Tibial artery (tissue), 4 donors: ENCODE measurements at regions of chr2 and their contacts with region 1.

Region 1: DNA sequence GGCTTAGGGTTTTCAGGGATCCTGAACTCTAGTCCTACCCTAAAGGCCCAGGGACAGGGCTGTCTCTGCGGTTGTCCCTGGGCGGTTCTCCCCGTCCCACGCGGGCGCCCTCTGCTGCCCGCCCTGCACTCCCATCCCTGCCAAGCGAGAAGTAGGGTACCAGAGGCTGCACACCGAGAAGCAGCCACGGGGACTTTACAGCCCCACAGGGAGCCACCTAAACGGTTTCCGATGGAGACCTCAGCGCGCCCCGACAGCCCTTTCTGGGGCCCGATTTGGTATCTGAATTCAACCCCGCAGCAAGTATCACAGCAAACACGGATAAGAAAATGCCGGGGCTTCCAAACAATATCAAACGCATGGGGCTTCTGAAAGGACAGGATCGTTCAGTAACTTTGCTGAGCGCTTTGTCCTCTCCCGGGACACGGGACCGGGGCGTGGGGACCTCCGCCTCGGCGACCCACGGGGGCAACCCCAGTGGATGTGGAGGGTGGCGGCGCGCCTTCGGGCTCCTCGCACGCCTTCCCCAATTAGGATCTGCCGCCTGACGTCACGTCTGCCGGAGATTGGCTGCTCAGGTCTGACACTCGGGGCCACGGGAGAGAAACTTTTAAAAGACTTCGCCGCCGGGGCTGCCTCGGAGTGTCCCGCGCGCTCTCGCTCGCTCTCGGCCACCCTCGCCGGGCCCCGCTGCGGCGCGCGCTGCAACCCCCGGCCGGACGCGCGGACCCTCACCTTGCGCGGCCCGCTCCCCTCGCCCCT is at the start of gene LTBP1:
- DNase-seq: peak; percentile 51 to 89
- H3K4me3 ChIP-seq: peak within 1 kb of the TSS; percentile 77 to 82
- H3K27ac ChIP-seq: peak within 1 kb of the TSS; percentile 77 to 82
- H3K4me1 ChIP-seq: peaks cover 0 to 15% (median 9%) of the 10 kb centered on the region in 4 donors
- H3K27me3 ChIP-seq: no peaks in the 10 kb centered on the region
- CTCF ChIP-seq: peak; percentile 40 to 75

Region 2: GRCh38 chr2:33022989-33023727 is 76.7 kb after region 1 on chr2:
- intact Hi-C with region 1: loop called (anchors 5 kb)
- DNase-seq: no peak
- H3K4me3 ChIP-seq: no peak overlapping the region
- H3K27ac ChIP-seq: peak overlapping the region in 1 of 2 donors; percentile 67
- H3K4me1 ChIP-seq: peaks cover 0 to 43% (median 6%) of the 10 kb centered on the region in 4 donors
- H3K27me3 ChIP-seq: no peaks in the 10 kb centered on the region
- CTCF ChIP-seq: no peak